ENCODE measurements at regions of chr19 and their contacts with region 1.

Region 1: GRCh38 chr19:41144403-41144802 is 30.2 kb downstream of the CYP2F1 start:
- DNase-seq: peak; percentile 89
- H3K4me3 ChIP-seq: no peak overlapping the region
- H3K27ac ChIP-seq: no peak overlapping the region
- H3K4me1 ChIP-seq: no peaks in the 10 kb centered on the region
- H3K27me3 ChIP-seq: peaks cover 0 to 20% (median 0%) of the 10 kb centered on the region in 7 donors
- CTCF ChIP-seq: peak; percentile 75 to 89 (median 84)
- POLR2A ChIP-seq: no peak

Region 2: GRCh38 chr19:40662921-40663694 is 481.3 kb before region 1 on chr19:
- intact Hi-C with region 1: loop called (anchors 5 kb)
- DNase-seq: peak; percentile 98
- H3K4me3 ChIP-seq: peak overlapping the region; percentile 64 to 94 (median 82)
- H3K27ac ChIP-seq: peak overlapping the region; percentile 68 to 94 (median 88)
- H3K4me1 ChIP-seq: peaks cover 0 to 23% (median 15%) of the 10 kb centered on the region in 6 donors
- H3K27me3 ChIP-seq: no peaks in the 10 kb centered on the region
- CTCF ChIP-seq: peak in 9 of 11 experiments; percentile 46 to 100 (median 99)
- POLR2A ChIP-seq: no peak

Region 3: DNA sequence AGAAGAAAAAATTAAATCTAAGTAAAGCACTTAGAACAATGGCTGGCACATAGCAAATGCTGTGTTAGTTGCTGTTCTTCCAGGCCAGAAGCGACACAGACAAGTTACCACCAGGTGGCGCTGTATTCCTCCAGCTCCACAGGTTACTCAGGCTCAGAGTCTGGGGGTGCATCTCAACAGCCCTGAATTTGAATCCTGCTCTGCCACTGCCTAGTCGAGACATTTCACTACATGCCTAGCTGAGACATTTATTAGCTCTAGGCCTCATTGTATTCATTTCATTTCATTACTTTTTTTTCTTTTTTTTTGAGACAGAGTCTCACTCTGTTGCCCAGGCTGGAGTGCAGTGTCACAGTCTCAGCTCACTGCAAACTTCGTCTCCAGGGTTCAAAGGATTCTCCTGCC is 169.8 kb before region 1 on chr19:
- intact Hi-C with region 1: loop called (anchors 5 kb)
- DNase-seq: peak; percentile 85
- H3K4me3 ChIP-seq: no peak overlapping the region
- H3K27ac ChIP-seq: no peak overlapping the region
- H3K4me1 ChIP-seq: peaks cover 0 to 2% (median 0%) of the 10 kb centered on the region in 6 donors
- H3K27me3 ChIP-seq: peaks cover 0 to 46% (median 0%) of the 10 kb centered on the region in 7 donors
- CTCF ChIP-seq: peak; percentile 56 to 92 (median 87)
- POLR2A ChIP-seq: no peak

Region 4: DNA sequence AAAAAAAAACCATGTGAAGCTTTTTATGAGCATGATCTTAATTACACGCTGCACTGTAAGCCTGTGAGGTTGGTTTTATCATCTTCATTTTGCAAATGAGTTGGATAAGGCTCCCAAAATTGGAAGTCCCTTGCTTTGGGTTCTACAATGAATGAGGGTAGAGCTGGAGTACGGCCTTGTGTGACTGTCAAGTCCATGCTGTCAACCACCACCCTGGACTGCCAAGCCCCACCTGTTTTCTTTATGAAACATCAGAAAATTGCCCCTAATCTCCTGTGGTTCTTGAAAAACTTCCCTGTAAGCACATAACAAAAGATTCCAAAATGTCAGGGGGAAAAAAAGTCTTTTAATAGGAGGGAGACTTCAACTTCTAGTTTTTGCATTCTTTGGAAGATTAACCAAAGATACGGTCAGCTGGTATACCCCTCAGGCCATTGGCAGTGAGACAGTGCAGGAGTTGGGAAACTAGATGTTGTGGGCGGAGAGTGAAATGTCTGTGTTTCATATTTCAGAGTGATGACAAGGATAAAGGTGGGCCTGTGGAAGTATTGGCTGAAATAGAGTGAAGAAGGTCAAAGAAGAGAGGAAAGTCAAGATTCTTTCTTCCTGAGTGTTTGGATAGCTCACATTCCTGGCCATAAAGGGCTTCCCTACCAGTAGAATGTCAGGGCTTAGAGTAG is 112.6 kb before region 1 on chr19:
- intact Hi-C with region 1: no loop called
- DNase-seq: no peak
- H3K4me3 ChIP-seq: no peak overlapping the region
- H3K27ac ChIP-seq: no peak overlapping the region
- H3K4me1 ChIP-seq: no peaks in the 10 kb centered on the region
- H3K27me3 ChIP-seq: peaks cover 0 to 43% (median 0%) of the 10 kb centered on the region in 7 donors
- CTCF ChIP-seq: no peak
- POLR2A ChIP-seq: no peak

Region 5: DNA sequence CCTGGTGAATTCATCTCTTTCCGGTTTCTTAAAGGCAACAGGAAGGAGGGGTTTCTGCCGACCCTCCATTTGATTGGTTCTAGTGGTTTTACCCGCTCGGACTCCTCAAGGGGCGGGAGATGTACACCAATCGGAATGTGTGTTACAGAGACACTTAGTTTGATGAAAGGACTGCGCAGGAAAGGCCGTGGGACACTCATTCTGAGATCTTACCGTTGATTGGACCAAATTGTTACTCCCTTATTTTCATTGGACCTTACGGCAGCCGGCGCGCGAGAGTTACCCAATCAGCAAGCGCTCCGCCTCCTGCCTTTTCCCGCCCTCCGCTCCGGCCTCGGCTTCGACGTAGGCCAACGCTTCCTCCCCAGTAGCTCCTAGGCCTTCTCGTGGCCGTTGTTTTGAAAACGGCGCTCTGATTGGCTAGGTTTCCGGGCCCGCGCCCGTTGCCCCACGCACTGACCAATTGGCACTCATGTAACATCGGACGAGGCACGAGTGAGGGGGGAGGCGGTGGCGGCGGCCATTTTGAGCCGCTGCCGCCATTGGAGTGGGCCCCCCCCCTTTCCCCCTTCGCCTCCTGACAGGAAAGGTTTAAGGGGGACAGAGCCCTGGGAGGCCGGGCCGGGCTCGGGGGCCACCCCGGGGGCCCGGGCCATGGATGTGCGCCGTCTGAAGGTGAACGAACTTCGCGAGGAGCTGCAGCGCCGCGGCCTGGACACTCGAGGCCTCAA is 119.6 kb after region 1 on chr19 and contains the start of gene HNRNPUL1:
- intact Hi-C with region 1: no loop called
- DNase-seq: peak; percentile 98
- H3K4me3 ChIP-seq: peak within 1 kb of the TSS; percentile 73 to 89 (median 85)
- H3K27ac ChIP-seq: peak within 1 kb of the TSS; percentile 96 to 100 (median 99)
- H3K4me1 ChIP-seq: peaks cover 21 to 54% (median 46%) of the 10 kb centered on the region in 6 donors
- H3K27me3 ChIP-seq: no peaks in the 10 kb centered on the region
- CTCF ChIP-seq: peak in 5 of 11 experiments; percentile 16 to 53 (median 27)
- POLR2A ChIP-seq: peak in 1 of 3 donors; percentile 81
- total RNA-seq, gene HNRNPUL1: 161 to 213 (median 178) TPM

Measured in spleen (tissue), 13 donors.